Heart right ventricle (tissue), 16 donors: ENCODE measurements at regions of chr6 and their contacts with region 1.

Region 1: DNA sequence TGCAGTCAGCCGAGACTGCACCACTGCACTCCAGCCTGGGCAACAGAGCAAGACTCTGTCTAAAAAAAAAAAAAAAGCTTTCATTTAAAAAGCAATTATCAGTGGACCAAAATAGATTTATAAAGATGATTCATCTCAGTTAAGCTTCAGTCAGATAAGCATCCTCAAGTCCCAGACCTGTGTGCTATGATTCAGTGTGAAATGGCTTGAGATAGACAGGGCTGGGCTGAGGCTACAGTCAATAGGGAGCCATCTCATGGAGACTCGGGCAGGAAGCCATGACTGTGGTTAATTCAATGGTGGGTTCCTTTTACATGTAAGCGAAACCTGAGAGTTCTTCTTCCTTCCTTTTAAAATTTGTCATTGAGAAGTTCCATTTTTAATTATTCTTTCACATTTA is 276.0 kb downstream of the TFAP2A start:
- DNase-seq: no peak
- ATAC-seq: no peak
- H3K4me3 ChIP-seq: no peak overlapping the region
- H3K27ac ChIP-seq: no peak overlapping the region
- H3K4me1 ChIP-seq: no peaks in the 10 kb centered on the region
- H3K27me3 ChIP-seq: peaks cover 0 to 18% (median 0%) of the 10 kb centered on the region in 7 donors
- CTCF ChIP-seq: no peak

Region 2: GRCh38 chr6:10779076-10779475 is 640.2 kb after region 1 on chr6:
- intact Hi-C with region 1: loop called in 1 of 10 experiments (anchors 5 kb)
- DNase-seq: no peak
- ATAC-seq: no peak
- H3K4me3 ChIP-seq: no peak overlapping the region
- H3K27ac ChIP-seq: no peak overlapping the region
- H3K4me1 ChIP-seq: no peaks in the 10 kb centered on the region
- H3K27me3 ChIP-seq: no peaks in the 10 kb centered on the region
- CTCF ChIP-seq: no peak